Body of pancreas (tissue), 4 donors: ENCODE measurements at regions of chr9 and their contacts with region 1.

Region 1: DNA sequence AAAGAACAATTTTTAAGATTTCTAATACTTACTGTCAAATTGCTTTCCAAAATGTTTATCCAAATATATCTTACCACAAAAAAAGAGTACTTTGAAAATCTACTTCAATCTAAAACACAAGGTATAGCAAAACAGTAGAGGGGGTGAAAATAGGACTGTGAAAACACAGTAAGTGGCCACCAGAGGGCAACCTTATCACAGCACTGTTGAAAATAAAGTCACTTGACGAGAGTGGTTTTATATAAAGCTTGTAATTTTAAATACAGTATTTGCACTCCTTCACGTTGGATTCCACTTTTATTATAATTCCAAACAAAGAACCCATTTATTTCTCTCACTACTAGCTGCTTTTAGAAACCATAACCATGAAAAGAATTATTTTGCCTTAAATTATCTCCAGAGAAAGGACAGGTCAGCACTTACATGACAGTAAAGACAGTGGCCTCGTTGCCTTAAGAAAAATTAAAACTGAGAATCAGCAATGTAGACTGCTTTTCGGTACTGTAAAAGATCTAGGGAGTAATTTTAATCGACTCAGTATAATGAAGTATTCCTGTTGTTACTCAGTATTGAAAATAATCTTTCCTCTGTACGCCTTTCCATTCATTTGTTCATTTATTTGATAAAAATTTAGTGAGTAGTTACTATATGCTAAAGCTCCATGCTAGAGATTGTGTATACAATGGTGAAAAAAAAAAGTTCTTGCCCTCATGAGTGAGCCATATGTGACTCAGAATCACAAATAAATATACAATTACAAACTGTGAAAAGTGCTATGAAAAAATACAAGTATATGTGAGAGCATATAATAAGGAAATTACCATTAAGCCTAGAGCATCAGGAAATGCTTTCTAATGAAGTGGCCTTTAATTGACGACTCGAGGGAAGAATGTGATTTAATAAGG is 40.0 kb upstream of the CDK5RAP2 start:
- DNase-seq: peak; percentile 69 to 79 (median 74)
- ATAC-seq: peak; percentile 77
- H3K4me3 ChIP-seq: no peak overlapping the region
- H3K27ac ChIP-seq: no peak overlapping the region
- H3K4me1 ChIP-seq: peaks cover 3% of the 10 kb centered on the region
- H3K27me3 ChIP-seq: no peaks in the 10 kb centered on the region
- CTCF ChIP-seq: peak; percentile 71 to 89 (median 83)
- POLR2A ChIP-seq: no peak

Region 2: GRCh38 chr9:120729791-120730241 is 109.8 kb after region 1 on chr9:
- intact Hi-C with region 1: loop called (anchors 10 kb)
- DNase-seq: no peak
- ATAC-seq: no peak
- H3K4me3 ChIP-seq: no peak overlapping the region
- H3K27ac ChIP-seq: no peak overlapping the region
- H3K4me1 ChIP-seq: peaks cover 17% of the 10 kb centered on the region
- H3K27me3 ChIP-seq: no peaks in the 10 kb centered on the region
- CTCF ChIP-seq: no peak
- POLR2A ChIP-seq: no peak

Region 3: GRCh38 chr9:121398374-121398773 is 778.4 kb after region 1 on chr9:
- intact Hi-C with region 1: no loop called
- DNase-seq: no peak
- ATAC-seq: no peak
- H3K4me3 ChIP-seq: no peak overlapping the region
- H3K27ac ChIP-seq: no peak overlapping the region
- H3K4me1 ChIP-seq: no peaks in the 10 kb centered on the region
- H3K27me3 ChIP-seq: no peaks in the 10 kb centered on the region
- CTCF ChIP-seq: no peak
- POLR2A ChIP-seq: no peak